ENCODE measurements at regions of chr17 and their contacts with region 1.

Region 1: GRCh38 chr17:49575579-49576087 is at the start of gene NXPH3:
- DNase-seq: peak; percentile 75
- ATAC-seq: peak; percentile 87
- H3K4me3 Mint-ChIP-seq: peak within 1 kb of the TSS; percentile 68
- H3K27ac Mint-ChIP-seq: no peak within 1 kb of the TSS
- H3K4me1 Mint-ChIP-seq: peaks cover 21% of the 10 kb centered on the region
- H3K27me3 Mint-ChIP-seq: peaks cover 50% of the 10 kb centered on the region
- CTCF ChIP-seq: peak; percentile 77
- total RNA-seq, gene NXPH3: 0.20 to 0.29 TPM

Region 2: DNA sequence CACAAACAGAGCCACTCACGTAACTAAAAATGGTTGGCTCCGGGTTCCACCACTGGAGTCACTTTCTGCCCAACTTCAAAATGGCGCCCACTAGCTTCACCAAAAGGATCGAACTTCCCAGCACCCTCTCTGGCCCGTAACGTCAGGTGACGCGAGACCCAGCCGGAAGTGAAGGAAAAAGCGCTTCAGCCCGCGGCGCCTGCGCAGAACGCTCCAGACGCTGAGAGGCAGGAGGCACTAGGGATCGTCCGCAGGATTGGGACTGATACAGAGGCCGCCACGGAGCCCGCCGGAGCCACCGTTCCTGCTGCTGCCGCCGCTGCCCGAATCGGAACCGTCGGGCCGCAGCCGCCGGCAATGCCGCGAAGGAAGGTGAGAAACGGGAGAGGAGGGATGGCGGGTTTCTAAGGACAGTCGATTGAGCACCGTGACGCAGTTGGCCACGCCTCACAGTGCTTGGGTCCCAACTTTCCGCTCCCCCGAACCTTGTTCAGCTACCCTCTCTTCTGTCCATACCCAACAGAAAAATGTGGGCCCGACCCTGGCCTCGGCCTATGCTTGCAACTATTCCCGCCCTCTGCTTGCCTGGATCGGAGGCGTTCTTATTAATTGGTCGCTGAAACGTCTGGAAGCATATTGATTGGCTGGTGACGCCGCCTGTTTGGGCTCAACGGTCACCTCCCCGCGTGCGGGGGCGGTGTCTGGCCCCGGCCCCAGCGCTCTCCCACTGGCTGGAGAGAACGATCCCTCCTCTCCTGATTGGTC is 213.0 kb after region 1 on chr17 and contains the start of gene KAT7:
- CTCF ChIA-PET with region 1: interaction called, 6 read pairs
- POLR2A ChIA-PET with region 1: no interaction called
- intact Hi-C with region 1: loop called (anchors 10 kb)
- DNase-seq: peak; percentile 99
- ATAC-seq: peak; percentile 90
- H3K4me3 Mint-ChIP-seq: peak within 1 kb of the TSS; percentile 94
- H3K27ac Mint-ChIP-seq: peak within 1 kb of the TSS; percentile 99
- H3K4me1 Mint-ChIP-seq: peaks cover 50% of the 10 kb centered on the region
- H3K27me3 Mint-ChIP-seq: no peaks in the 10 kb centered on the region
- CTCF ChIP-seq: no peak
- total RNA-seq, gene KAT7: 61.2 to 66.6 TPM

Region 3: DNA sequence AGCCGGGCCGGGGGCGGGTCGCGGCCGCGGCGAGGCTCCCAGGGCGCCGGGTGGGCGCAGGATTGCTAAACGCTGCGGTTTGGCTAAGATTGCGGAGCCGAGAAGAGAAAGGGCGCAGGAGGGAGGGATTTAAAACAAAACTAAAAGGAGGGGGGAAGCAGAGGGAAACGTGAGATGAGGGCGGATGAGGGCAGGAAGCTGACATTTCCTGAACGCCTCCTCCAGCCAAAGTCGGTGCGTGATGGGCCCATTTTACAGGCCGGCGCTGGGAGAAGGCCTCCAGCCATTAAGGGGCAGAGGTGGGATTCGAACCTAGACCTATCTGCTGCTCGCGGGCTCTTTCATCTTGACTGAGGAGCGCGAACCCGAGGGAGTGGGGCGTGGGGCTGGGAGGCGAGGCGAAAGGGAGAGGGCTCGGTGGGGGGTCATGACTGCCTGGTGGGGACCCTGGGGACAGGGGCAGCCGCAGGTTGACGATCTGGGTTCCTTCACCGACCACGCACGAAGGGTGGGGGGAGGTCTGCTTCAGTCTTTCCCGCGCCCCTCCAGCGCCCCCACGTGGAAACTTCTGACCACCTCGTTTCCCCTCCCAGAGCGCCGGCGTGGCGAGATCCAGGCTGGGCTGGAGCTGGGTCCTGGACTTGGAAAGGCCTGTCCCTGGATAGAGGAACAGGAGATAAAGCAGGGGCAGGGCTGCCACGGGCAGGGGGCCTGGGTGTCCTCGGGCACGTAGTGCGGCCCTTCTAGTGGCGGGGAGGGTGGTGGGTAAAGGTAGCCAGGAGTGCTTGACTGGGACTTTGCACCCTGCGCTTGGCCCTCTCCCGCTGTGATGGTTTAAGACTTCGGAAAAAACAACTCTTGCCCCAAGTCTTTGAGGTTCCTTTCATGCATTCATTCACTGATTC is 276.0 kb after region 1 on chr17:
- CTCF ChIA-PET with region 1: no interaction called
- POLR2A ChIA-PET with region 1: interaction called, 3 read pairs
- intact Hi-C with region 1: loop called (anchors 10 kb)
- DNase-seq: peak; percentile 80
- ATAC-seq: peak; percentile 77
- H3K4me3 Mint-ChIP-seq: peak overlapping the region; percentile 76
- H3K27ac Mint-ChIP-seq: peak overlapping the region; percentile 81
- H3K4me1 Mint-ChIP-seq: peaks cover 14% of the 10 kb centered on the region
- H3K27me3 Mint-ChIP-seq: no peaks in the 10 kb centered on the region
- CTCF ChIP-seq: peak; percentile 80